HEK293 (cell line): ENCODE measurements at regions of chr18 and their contacts with region 1.

Region 1: DNA sequence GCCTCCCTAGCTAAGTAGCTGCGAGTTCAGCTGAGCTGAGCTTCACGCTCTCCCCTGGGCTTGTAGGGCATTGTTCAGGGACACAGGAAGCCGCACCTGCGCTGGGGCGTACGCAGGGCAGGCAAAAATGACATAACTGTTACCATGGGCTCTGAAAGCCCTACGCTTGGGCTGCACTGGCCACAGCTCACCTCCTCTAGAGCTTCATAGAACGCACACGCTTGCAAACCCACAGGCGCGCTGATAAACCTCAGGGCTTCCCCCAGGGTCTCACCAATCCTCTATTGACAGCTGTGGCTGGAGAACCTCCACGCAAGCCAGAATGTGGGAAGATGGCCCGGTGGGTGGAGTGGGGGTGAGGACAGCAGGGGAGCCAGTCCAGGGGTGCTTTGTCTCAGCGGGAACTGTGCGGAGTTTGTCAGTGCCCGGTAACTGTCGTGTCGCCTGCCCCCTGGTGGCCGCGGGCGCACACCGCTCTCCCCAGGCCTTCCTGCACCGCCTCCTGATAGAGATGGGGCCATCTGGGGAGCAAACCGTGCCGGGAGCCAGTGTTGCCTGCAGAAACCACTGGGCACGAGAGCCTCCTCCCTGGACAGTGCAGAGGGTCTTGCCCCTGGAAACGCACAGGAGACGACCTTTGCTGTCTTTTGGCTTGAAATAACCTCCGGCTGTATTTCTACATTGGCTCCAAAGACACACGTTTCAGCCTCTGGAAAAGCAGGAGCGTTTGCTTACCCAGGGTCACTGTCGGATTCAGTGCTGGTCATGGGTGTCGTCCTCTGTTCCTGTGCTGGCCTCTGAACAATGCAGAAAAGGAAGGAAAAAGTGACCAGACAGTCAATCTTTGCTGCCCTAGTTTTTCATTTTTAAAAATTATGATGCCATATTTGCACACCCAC is 17.0 kb upstream of the CIDEA start:
- H3K4me3 ChIP-seq: no peak overlapping the region
- H3K27ac ChIP-seq: no peak overlapping the region
- H3K4me1 ChIP-seq: no peaks in the 10 kb centered on the region
- CTCF ChIP-seq: peak; percentile 86

Region 2: DNA sequence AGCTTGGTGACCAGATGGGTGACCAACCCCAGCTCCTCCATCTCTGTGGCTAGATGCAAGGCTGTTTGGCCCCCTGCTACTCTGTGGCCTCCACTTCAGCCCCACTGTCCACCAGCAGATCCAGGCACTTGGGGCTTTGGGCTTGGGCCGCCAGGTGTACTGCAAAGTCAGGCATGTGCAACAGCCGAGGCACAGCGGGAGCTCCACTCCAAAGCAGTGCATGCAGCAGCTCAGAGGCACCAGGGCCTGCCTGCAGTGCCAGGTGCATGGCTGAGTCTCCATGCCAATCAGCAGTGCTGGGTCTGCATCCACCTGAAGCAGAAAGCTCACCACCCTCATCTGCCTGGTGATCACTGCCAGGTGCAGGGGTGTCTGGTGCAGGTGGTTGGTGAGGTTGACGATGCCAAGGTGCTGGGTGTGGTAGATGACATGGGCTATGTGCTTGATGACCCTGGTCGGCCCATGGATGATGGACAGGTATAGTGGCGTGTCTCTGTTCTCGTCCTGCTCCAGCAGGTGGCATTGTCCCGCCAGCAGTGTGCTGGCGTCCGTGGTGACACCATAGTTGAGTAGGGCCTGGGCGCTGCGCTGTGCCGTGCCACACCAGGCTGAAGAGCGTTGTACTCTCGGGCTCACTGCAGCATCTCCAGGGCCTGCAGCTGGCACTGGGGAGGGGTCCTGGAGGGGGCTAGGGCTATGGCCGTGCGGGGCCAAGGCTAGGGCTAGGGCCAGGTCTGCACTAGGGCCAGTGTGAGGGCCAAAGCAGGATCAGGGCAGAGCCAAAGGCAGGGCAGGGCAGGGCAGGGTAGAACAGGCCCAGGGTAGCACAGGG is 144.6 kb before region 1 on chr18:
- CTCF ChIA-PET with region 1: interaction called, 10 read pairs
- POLR2A ChIA-PET with region 1: no interaction called
- H3K4me3 ChIP-seq: no peak overlapping the region
- H3K27ac ChIP-seq: no peak overlapping the region
- H3K4me1 ChIP-seq: no peaks in the 10 kb centered on the region
- CTCF ChIP-seq: peak; percentile 53

Region 3: GRCh38 chr18:12098374-12098773 is 138.8 kb before region 1 on chr18:
- CTCF ChIA-PET with region 1: interaction called, 11 read pairs
- POLR2A ChIA-PET with region 1: no interaction called
- H3K4me3 ChIP-seq: no peak overlapping the region
- H3K27ac ChIP-seq: no peak overlapping the region
- H3K4me1 ChIP-seq: no peaks in the 10 kb centered on the region
- CTCF ChIP-seq: no peak

Region 4: DNA sequence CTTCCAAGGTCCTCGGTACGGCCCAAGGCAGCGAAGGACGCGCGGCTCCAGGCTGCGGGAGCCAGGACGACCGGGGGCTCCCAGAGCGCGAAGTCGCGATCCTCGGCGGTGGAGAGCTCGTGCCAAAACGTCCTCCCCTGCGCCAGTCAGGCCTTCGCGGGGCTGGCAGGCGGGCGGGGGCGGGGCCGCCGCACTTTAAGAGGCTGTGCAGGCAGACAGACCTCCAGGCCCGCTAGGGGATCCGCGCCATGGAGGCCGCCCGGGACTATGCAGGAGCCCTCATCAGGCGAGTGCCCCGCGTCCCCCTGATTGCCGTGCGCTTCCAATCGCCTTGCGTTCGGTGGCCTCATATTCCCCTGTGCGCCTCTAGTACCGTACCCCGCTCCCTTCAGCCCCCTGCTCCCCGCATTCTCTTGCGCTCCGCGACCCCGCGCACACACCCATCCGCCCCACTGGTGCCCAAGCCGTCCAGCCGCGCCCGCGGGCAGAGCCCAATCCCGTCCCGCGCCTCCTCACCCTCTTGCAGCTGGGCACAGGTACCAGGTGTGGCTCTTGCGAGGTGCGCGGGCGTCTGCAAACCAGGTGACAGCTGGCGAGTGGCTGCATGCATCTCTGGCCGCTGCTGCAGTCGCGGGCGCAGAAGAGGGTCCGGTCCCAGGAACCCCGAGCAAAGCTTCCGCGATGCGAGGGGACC is 17.1 kb after region 1 on chr18 and contains the start of gene CIDEA:
- CTCF ChIA-PET with region 1: interaction called, 28 read pairs
- POLR2A ChIA-PET with region 1: no interaction called
- H3K4me3 ChIP-seq: no peak within 1 kb of the TSS
- H3K27ac ChIP-seq: no peak within 1 kb of the TSS
- H3K4me1 ChIP-seq: no peaks in the 10 kb centered on the region
- CTCF ChIP-seq: no peak

Region 5: GRCh38 chr18:12883684-12884405 is 646.7 kb after region 1 on chr18 and contains the start of gene PTPN2:
- CTCF ChIA-PET with region 1: no interaction called
- POLR2A ChIA-PET with region 1: no interaction called
- H3K4me3 ChIP-seq: peak within 1 kb of the TSS; percentile 84
- H3K27ac ChIP-seq: peak within 1 kb of the TSS; percentile 95
- H3K4me1 ChIP-seq: peaks cover 17% of the 10 kb centered on the region
- CTCF ChIP-seq: no peak